ENCODE measurements at regions of chr5 and their contacts with region 1.

Region 1: DNA sequence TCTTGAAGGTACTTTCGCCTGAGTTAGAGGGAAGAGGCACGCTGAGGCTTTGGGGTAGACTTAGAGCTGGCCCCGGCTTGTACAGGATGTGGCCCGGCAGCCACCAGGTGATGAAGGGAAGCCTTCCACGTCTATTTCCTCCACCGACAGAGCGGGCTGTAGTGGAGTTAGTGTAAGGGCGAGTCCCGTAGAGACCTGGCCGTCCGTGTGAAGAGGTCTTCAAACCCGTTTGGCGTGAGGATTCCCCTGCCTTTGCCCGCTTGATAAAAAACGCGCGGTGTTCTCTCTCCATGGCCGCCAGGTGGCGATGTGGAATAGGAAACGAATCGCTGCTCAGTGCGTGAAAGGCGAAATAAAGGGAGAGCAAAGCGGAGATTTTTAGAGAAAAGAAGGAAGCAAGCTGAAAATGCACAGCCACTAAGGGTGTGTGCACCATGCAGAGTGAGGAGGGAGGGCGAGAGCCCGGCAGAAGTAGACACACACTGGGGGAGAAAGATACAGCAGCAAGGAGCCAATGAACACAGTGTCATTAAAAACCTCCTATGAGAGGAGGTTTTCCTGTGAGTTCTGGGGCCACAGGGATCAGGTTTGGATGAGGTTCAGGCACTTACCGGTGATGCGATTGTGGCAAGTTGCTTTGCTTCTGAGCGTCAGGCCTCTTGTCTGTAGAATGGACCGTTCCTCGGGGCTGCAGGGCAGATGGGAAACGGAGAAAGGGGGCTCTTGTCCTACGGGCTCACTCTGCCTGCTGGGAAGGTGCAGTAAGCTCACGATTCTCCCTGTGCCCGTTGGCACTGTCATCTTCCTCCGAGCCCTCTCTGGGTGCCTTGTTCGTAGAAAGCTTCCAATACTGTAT is 34.2 kb downstream of the STC2 start:
- DNase-seq: peak; percentile 82 to 88
- H3K4me3 ChIP-seq: no peak overlapping the region
- H3K4me3 Mint-ChIP-seq: peak overlapping the region; percentile 62
- H3K27ac Mint-ChIP-seq: peak overlapping the region; percentile 44
- H3K4me1 ChIP-seq: peaks cover 35% of the 10 kb centered on the region
- H3K4me1 Mint-ChIP-seq: peaks cover 20% of the 10 kb centered on the region
- H3K27me3 ChIP-seq: no peaks in the 10 kb centered on the region; the same call in 1 of the 2 replicates
- H3K27me3 Mint-ChIP-seq: no peaks in the 10 kb centered on the region
- CTCF ChIP-seq: peak; percentile 92 to 93

Region 2: DNA sequence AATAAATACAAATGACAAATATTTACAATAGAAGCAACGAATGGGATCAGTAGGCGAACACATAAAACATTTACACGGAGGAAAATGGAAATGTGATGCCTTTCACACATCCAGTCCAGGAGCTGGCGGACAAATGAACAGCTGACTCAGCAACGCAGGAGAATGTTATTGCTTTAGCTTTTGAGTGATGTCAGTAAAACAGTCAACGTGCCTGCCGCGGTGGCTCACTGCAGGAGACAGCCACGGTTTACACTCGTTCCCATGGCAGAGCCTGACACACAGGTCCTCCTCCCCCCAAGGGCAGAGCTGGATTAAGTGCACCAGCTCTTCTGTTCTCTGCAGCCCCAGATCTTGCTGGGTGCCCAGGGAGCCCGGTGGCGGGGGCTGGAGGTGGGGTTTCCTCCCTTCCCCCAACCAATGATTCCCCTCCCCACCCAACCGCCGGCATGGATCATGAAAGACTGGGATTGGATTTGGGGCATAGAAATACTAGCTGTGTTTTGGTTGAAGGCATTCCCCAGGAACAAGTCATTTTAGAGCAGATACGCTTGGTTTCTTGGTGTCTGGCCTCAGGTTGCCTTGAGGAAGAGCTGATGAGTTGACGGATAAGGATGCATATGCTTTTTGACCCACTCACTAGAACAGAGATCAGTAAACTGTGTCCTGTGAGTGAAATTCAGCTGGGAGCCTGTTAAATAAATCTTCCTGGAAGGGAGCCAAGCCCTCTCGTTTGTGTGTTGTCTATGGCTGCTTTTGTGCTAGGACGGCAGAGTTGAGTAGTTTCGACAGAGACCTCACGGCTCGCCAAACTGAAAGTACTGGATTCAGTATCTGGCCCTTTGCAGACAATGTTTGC is 21.7 kb after region 1 on chr5:
- CTCF ChIA-PET with region 1: interaction called, 6 read pairs
- POLR2A ChIA-PET with region 1: no interaction called
- intact Hi-C with region 1: loop called (anchors 1 kb)
- DNase-seq: peak; percentile 24 to 61
- H3K4me3 ChIP-seq: no peak overlapping the region
- H3K4me3 Mint-ChIP-seq: no peak overlapping the region
- H3K27ac Mint-ChIP-seq: peak overlapping the region; percentile 89
- H3K4me1 ChIP-seq: no peaks in the 10 kb centered on the region
- H3K4me1 Mint-ChIP-seq: peaks cover 27% of the 10 kb centered on the region
- H3K27me3 ChIP-seq: no peaks in the 10 kb centered on the region
- H3K27me3 Mint-ChIP-seq: no peaks in the 10 kb centered on the region
- CTCF ChIP-seq: no peak

Region 3: GRCh38 chr5:173396311-173396993 is 102.4 kb after region 1 on chr5:
- CTCF ChIA-PET with region 1: no interaction called
- POLR2A ChIA-PET with region 1: no interaction called
- intact Hi-C with region 1: loop called (anchors 5 kb)
- DNase-seq: peak; percentile 34 to 38
- H3K4me3 ChIP-seq: no peak overlapping the region
- H3K4me3 Mint-ChIP-seq: no peak overlapping the region
- H3K27ac Mint-ChIP-seq: no peak overlapping the region
- H3K4me1 ChIP-seq: no peaks in the 10 kb centered on the region
- H3K4me1 Mint-ChIP-seq: no peaks in the 10 kb centered on the region
- H3K27me3 ChIP-seq: no peaks in the 10 kb centered on the region
- H3K27me3 Mint-ChIP-seq: peaks cover 2% of the 10 kb centered on the region
- CTCF ChIP-seq: peak; percentile 22 to 38

Region 4: GRCh38 chr5:173573126-173573960 is 279.3 kb after region 1 on chr5:
- CTCF ChIA-PET with region 1: interaction called, 8 read pairs
- POLR2A ChIA-PET with region 1: no interaction called
- intact Hi-C with region 1: loop called (anchors 1 kb)
- DNase-seq: peak; percentile 70 to 85
- H3K4me3 ChIP-seq: peak overlapping the region; percentile 17; the same call in 1 of the 2 replicates
- H3K4me3 Mint-ChIP-seq: peak overlapping the region; percentile 44
- H3K27ac Mint-ChIP-seq: peak overlapping the region; percentile 51
- H3K4me1 ChIP-seq: peaks cover 3% of the 10 kb centered on the region; the same call in 1 of the 2 replicates
- H3K4me1 Mint-ChIP-seq: peaks cover 11% of the 10 kb centered on the region
- H3K27me3 ChIP-seq: no peaks in the 10 kb centered on the region
- H3K27me3 Mint-ChIP-seq: no peaks in the 10 kb centered on the region
- CTCF ChIP-seq: peak; percentile 91 to 97

Region 5: DNA sequence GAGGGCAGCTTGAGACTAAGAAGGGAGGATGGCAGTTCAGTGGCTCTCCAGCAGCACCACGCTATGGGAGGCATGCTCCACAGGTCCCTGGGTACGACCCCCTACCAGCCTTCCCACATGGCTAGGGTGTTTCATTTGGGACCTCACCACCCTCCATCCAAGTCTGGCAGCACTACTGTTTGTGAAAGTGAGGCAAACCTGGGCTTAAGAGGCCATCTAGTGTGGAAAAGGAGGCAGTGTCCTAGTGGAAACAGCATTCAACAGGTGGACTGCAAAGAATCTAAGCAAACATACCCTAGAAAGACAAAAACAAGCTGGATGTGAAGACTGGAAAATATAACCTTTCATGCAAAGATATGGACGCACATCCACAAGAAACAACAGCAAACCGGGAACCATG is 690.2 kb after region 1 on chr5:
- CTCF ChIA-PET with region 1: no interaction called
- POLR2A ChIA-PET with region 1: no interaction called
- intact Hi-C with region 1: loop called (anchors 2 kb)
- DNase-seq: peak in 1 of 2 experiments; percentile 57
- H3K4me3 ChIP-seq: no peak overlapping the region
- H3K4me3 Mint-ChIP-seq: no peak overlapping the region
- H3K27ac Mint-ChIP-seq: no peak overlapping the region
- H3K4me1 ChIP-seq: no peaks in the 10 kb centered on the region
- H3K4me1 Mint-ChIP-seq: no peaks in the 10 kb centered on the region
- H3K27me3 ChIP-seq: no peaks in the 10 kb centered on the region
- H3K27me3 Mint-ChIP-seq: peaks cover 3% of the 10 kb centered on the region
- CTCF ChIP-seq: peak; percentile 70 to 79

Measured in Caco-2 (cell line).